ENCODE measurements at regions of chr14 and their contacts with region 1.

Region 1: DNA sequence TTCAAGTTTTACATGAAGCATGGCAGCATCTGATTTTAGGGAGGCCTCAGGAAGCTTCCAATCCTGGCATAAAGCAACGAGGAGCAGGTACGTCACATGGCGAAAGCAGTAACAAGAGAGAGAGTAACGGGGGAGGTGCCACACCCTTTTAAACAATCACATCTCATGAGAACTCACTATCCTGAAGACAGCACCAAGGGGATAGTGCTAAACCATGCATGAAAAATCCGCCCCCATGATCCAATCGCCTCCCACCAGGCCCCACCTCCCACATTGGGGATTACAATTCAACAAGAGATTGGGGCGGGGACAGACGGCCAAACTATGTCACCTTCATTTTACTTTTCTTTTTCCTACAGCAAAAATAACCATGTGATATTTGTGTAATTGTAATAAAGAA is 7.2 kb upstream of the MAP3K9 start:
- DNase-seq: no peak
- ATAC-seq: no peak
- H3K4me3 Mint-ChIP-seq: no peak overlapping the region
- H3K27ac Mint-ChIP-seq: no peak overlapping the region
- H3K4me1 Mint-ChIP-seq: peaks cover 12% of the 10 kb centered on the region
- H3K27me3 Mint-ChIP-seq: peaks cover 15% of the 10 kb centered on the region
- CTCF ChIP-seq: no peak

Region 2: GRCh38 chr14:70555890-70556289 is 260.6 kb before region 1 on chr14:
- CTCF ChIA-PET with region 1: no interaction called
- POLR2A ChIA-PET with region 1: no interaction called
- intact Hi-C with region 1: no loop called
- DNase-seq: no peak
- ATAC-seq: no peak
- H3K4me3 Mint-ChIP-seq: no peak overlapping the region
- H3K27ac Mint-ChIP-seq: no peak overlapping the region
- H3K4me1 Mint-ChIP-seq: peaks cover 3% of the 10 kb centered on the region
- H3K27me3 Mint-ChIP-seq: no peaks in the 10 kb centered on the region
- CTCF ChIP-seq: no peak

Region 3: GRCh38 chr14:70600382-70601157 is 216.0 kb before region 1 on chr14 and contains the start of gene MED6:
- CTCF ChIA-PET with region 1: interaction called, 17 read pairs
- POLR2A ChIA-PET with region 1: no interaction called
- intact Hi-C with region 1: no loop called
- DNase-seq: peak; percentile 96
- ATAC-seq: peak; percentile 100
- H3K4me3 Mint-ChIP-seq: peak within 1 kb of the TSS; percentile 99
- H3K27ac Mint-ChIP-seq: peak within 1 kb of the TSS; percentile 97
- H3K4me1 Mint-ChIP-seq: peaks cover 26% of the 10 kb centered on the region
- H3K27me3 Mint-ChIP-seq: peaks cover 2% of the 10 kb centered on the region
- CTCF ChIP-seq: no peak
- total RNA-seq, gene MED6: 49.2 to 49.3 TPM

Region 4: DNA sequence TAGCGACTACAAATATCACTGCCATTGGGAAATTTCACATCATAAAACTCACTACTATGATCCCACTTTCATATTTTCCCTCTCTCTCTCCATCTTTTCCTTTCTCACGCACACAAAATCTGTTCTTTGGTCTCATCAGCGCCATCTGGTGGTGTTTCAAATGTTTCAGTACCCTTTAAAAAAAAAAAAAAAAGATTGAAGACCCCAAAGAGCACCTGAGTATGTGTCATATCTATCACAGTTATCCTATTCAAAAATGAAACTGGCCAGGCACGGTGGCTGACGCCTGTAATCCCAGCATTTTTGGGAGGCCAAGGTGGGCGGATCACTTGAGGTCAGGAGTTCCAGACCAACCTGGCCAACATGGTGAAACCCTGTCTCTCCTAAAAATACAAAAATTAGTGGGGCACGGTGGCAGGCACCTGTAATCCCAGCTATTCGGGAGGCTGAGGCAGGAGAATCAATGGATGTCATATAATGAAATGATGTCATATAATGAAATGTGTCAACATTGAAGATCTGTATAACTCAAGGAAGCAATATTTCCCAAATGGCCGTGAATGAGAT is 102.4 kb before region 1 on chr14:
- CTCF ChIA-PET with region 1: interaction called, 21 read pairs
- POLR2A ChIA-PET with region 1: no interaction called
- intact Hi-C with region 1: loop called (anchors 10 kb)
- DNase-seq: peak; percentile 70
- ATAC-seq: peak; percentile 64
- H3K4me3 Mint-ChIP-seq: no peak overlapping the region
- H3K27ac Mint-ChIP-seq: no peak overlapping the region
- H3K4me1 Mint-ChIP-seq: peaks cover 2% of the 10 kb centered on the region
- H3K27me3 Mint-ChIP-seq: no peaks in the 10 kb centered on the region
- CTCF ChIP-seq: peak; percentile 97

Region 5: GRCh38 chr14:70887207-70887681 is 70.7 kb after region 1 on chr14:
- CTCF ChIA-PET with region 1: interaction called, 42 read pairs
- POLR2A ChIA-PET with region 1: interaction called, 21 read pairs
- intact Hi-C with region 1: no loop called
- DNase-seq: no peak
- ATAC-seq: peak; percentile 8
- H3K4me3 Mint-ChIP-seq: peak overlapping the region; percentile 50
- H3K27ac Mint-ChIP-seq: peak overlapping the region; percentile 85
- H3K4me1 Mint-ChIP-seq: peaks cover 71% of the 10 kb centered on the region
- H3K27me3 Mint-ChIP-seq: no peaks in the 10 kb centered on the region
- CTCF ChIP-seq: no peak

Region 6: DNA sequence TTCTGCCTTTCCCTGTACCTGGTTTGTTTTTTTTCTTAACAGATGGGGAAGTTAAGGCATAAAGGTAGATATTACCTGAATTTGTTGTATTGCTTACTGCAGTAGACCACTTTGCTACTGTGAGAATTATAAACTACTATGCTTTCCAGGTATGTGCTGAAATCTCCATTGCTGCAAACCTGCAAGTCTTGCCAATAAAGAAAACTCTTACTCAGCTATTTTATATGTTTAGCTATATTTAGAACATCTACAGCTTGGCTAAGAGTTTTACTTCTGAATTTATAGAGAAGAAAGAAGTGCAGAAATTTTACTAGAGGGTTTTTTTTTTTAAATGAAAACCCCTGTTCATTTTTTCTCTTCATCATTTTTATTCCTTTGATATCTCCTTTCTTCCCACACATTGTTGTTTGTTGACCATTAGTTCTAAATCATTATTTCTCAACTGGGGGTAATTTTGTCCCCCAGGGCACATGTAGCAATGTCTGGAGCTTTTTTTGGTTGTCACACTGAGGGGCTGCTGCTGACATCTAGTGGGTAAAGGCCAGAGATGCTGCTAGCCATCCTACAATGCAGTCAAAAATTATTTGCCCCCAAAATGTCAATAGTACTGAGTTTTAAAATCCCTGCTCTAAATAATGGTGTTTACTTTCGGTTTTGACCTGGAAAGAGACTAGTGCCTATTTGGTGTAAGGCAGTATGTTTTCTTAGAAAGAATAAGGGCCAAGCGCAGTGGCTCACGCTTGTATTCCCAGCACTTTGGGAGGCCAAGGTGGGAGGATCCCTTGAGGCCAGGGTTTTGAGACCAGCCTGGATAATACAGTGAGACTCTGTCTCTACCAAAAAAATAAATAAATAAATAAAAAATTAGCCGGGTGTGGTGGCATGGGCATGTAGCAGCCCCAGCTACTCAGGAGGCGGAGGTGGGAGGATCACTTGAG is 139.3 kb after region 1 on chr14:
- CTCF ChIA-PET with region 1: interaction called, 72 read pairs
- POLR2A ChIA-PET with region 1: interaction called, 3 read pairs
- intact Hi-C with region 1: no loop called
- DNase-seq: peak; percentile 58
- ATAC-seq: peak; percentile 80
- H3K4me3 Mint-ChIP-seq: no peak overlapping the region
- H3K27ac Mint-ChIP-seq: no peak overlapping the region
- H3K4me1 Mint-ChIP-seq: peaks cover 37% of the 10 kb centered on the region
- H3K27me3 Mint-ChIP-seq: no peaks in the 10 kb centered on the region
- CTCF ChIP-seq: peak; percentile 78

Region 7: GRCh38 chr14:70972107-70972976 is 155.8 kb after region 1 on chr14:
- CTCF ChIA-PET with region 1: interaction called, 32 read pairs
- POLR2A ChIA-PET with region 1: interaction called, 4 read pairs
- intact Hi-C with region 1: loop called (anchors 5 kb)
- DNase-seq: peak; percentile 94
- ATAC-seq: peak; percentile 78
- H3K4me3 Mint-ChIP-seq: no peak overlapping the region
- H3K27ac Mint-ChIP-seq: peak overlapping the region; percentile 57
- H3K4me1 Mint-ChIP-seq: peaks cover 40% of the 10 kb centered on the region
- H3K27me3 Mint-ChIP-seq: no peaks in the 10 kb centered on the region
- CTCF ChIP-seq: peak; percentile 83

Region 8: DNA sequence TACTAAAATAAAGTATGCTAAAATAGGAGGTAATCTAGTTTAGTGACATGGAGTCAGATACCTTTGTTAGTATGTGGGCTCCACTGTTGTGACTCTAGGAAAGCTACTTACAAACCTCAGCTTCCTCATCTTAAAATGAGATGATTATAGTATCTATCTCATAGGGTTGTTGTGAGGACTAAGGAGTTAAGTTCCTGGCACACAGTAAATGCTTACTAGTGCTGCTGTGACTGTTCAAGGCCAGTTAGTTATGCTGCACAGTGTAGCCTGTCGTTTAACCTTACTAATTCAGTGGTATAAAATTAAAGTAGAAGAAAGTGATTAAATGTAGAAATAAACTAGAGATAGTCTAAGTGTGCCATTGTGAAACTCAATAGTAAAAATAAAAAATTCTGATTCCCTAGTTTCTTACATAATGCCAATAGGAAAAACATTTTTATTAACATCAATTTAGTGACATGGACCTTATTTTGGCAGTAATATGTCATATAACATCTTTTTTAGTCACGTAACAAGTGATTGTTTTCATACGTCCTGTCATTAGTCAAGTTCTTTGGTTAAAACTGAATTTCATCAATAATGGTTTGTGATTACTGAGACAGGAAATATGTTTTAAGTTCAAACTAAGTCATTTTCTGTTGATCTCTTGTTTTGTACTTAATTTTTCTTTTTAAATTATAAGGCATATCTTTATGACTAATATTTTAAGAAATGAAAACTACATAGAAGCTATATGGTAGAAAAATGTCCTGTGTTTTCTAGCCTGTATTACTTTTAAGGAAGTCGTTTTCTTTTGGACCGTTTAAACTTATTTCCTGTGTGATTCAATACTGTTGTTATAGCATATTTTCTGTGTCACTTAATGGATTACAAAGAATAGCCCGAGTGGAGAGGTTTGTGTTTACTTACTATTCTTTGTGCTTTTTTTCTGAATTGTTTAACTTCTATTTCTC is 164.8 kb after region 1 on chr14:
- CTCF ChIA-PET with region 1: interaction called, 21 read pairs
- POLR2A ChIA-PET with region 1: no interaction called
- intact Hi-C with region 1: no loop called
- DNase-seq: no peak
- ATAC-seq: peak; percentile 71
- H3K4me3 Mint-ChIP-seq: peak overlapping the region; percentile 10
- H3K27ac Mint-ChIP-seq: peak overlapping the region; percentile 88
- H3K4me1 Mint-ChIP-seq: peaks cover 48% of the 10 kb centered on the region
- H3K27me3 Mint-ChIP-seq: no peaks in the 10 kb centered on the region
- CTCF ChIP-seq: no peak